ENCODE measurements at regions of chr3 and their contacts with region 1.

Region 1: GRCh38 chr3:11335056-11335608 is 62.9 kb downstream of the ATG7 start:
- DNase-seq: peak; percentile 82
- H3K4me3 ChIP-seq: no peak overlapping the region
- H3K27ac ChIP-seq: no peak overlapping the region
- H3K4me1 ChIP-seq: peaks cover 23% of the 10 kb centered on the region
- H3K27me3 ChIP-seq: no peaks in the 10 kb centered on the region

Region 2: DNA sequence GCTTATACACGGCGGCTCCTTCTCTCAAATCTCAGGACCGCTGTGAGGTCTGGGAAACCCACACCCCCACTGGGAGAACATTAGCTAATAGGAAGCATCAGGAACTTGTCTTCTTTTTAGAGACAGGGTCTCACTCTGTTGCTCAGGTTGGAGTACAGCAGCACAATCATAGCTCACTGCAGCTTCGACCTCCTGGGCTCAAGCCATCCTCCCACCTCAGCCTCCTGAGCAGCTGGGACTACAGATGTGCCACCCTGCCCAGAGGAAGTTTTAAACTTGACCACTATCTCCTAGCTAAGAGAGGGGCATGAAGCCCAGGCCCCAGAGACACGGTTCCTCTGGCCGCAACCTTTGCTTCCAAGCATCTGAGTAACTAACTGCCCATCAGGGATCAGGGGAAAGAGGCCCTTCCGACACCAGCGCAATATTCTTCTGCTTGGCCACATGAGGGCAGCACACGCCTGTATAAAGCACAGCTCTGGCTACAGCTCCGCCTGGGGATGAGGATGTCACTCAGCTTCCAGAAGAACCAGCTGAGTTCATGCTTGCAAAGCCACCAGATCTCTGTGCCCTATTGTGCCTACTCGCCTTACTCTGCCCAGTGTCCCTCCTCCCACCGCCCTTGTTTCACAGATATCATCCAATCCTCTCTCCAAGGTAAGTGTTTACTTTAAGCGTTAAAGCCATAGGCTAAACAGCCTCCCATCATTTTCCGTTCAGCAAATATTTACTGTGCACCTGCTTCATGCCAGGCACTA is 576.6 kb before region 1 on chr3:
- in situ Hi-C with region 1: loop called (anchors 25 kb)
- DNase-seq: peak; percentile 79
- H3K4me3 ChIP-seq: no peak overlapping the region
- H3K27ac ChIP-seq: no peak overlapping the region
- H3K4me1 ChIP-seq: no peaks in the 10 kb centered on the region
- H3K27me3 ChIP-seq: peaks cover 14% of the 10 kb centered on the region; the same call in 1 of the 2 replicates

Region 3: DNA sequence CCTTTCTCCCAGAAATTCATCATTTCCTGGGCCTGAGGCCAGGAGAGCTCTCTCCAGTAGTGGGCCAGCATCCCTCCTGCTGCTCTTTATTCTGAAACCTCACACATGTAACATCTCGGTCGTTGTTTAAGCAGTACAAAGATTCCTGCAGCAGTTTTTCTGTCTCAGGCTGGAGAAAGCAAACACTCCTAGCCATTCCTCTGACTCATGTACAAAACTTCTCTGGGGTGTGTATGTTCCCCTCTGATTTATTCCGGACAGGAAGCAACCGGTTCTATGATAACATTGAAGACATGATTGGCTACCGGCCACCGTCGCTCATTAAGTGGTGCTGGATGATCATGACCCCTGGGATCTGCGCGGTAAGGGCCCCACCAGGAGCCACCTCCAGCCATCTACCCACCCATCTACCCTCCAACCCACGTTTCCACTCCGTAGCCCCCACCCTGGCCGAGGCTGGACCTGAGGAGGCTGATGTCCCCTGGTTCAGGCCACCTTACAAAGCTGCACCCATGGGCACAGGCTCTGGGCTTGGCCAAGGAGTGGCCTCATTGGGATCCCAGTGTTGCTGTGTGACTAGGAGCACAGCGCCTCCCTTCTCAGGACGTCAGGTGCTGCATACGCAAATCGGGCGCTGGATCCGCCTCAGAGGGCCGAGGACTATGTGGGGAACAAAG is 401.2 kb before region 1 on chr3:
- in situ Hi-C with region 1: no loop called
- DNase-seq: no peak
- H3K4me3 ChIP-seq: no peak overlapping the region
- H3K27ac ChIP-seq: no peak overlapping the region
- H3K4me1 ChIP-seq: no peaks in the 10 kb centered on the region
- H3K27me3 ChIP-seq: peaks cover 26% of the 10 kb centered on the region

Region 4: DNA sequence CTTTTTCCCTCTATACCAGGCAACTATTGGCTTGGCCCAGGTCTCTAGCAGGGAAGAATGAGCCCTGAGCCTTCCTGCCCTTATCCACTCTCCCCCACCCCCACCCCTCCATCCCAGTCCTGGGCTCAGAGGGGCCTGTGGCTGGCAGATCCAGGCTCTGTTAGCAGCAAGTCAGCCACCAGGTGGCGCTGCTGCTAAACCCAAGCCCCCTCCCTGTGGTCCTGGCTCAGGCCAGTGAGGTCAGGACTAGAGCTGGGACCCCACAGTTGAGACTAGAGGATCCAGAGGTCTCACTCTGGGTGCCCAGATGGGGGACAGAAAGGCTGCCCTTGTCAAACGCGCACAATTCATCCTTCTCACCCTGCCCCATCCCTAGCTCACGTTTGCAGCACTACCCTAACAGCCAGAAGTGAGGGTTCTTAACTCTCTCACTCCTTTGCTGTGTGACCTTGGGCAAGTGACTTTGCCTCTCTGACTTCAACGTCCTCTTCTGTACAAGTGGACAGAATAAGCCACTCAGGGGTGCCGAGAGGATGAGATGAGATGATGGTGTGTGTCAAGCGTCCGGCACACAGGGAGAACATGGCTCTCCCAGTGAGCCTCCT is 389.3 kb before region 1 on chr3:
- in situ Hi-C with region 1: loop called (anchors 10 kb)
- DNase-seq: peak; percentile 59
- H3K4me3 ChIP-seq: no peak overlapping the region
- H3K27ac ChIP-seq: no peak overlapping the region
- H3K4me1 ChIP-seq: no peaks in the 10 kb centered on the region
- H3K27me3 ChIP-seq: no peaks in the 10 kb centered on the region; the same call in 1 of the 2 replicates

Region 5: DNA sequence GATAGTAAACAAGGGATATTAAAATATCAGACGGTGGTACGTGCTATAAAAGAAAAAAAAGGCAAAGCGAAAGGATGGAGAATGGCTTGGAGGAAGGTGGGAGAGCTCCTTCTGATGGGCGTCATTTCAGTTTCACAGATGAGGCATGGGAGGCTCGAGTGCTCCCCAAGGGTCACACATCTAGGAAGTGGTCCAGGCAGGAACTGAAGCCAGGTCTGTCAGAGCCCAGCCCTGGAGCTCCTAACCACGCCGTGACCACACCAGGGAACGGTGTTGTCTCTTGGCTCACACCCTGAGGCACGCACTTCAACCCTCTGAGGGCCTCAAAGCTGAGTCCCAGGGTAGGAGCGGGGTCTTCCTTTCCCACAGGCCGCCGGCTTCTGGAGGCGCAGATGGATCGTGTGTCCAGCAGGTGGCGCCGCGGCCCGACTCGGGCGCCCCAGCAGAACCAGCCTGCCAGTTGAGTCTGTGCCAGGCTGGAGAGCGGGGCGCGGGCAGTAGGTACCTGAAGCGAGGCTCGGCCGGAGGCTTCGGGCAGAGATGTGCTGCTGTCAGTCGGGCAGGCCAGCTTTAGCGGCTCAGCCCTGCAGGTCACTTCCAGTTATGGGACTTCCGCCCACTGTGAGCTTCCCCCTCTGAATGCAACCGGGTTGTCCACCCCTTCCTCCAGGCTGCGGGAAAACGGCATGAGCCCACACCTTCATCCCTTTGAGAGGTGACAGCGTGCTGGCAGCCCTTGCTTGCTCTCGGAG is 274.5 kb before region 1 on chr3:
- in situ Hi-C with region 1: loop called (anchors 25 kb)
- DNase-seq: peak; percentile 82
- H3K4me3 ChIP-seq: peak overlapping the region; percentile 56
- H3K27ac ChIP-seq: no peak overlapping the region
- H3K4me1 ChIP-seq: no peaks in the 10 kb centered on the region; the same call in 1 of the 2 replicates
- H3K27me3 ChIP-seq: no peaks in the 10 kb centered on the region; the same call in 1 of the 2 replicates

Region 6: DNA sequence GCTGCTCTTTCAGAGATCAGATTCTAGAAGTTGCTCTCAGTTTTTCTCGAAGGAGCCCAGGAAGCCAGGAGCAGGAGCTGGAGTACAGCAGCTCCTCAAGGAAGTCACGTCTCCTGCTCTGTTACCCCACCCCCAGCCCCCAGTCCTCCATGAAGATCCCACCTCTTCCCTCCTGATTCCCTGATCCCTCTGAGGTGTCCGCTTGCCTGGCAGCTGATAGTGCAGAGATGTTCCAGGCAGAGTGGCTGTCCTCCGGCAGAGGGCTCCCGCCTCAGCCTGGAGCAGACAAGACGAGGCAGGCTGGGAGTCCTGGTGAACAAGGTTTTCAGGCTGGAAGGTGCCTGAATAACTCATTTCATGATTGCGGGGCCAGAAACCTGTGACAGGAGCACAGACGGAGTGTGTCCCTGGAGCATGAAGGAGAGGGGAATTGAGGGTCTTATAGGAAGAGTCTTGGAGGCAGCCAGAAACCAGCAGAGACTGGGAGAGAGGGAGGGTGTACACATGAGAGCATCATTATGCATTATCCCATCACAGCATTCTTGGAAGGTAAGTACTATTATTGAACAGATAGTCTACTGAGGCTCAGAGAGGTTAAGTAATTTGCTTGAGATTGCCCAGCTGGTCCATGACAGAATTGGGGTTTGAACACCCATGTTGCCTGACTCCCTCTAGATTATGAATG is 179.6 kb before region 1 on chr3:
- in situ Hi-C with region 1: loop called (anchors 25 kb)
- DNase-seq: peak; percentile 94
- H3K4me3 ChIP-seq: peak overlapping the region; percentile 84
- H3K27ac ChIP-seq: peak overlapping the region; percentile 58
- H3K4me1 ChIP-seq: peaks cover 27% of the 10 kb centered on the region
- H3K27me3 ChIP-seq: no peaks in the 10 kb centered on the region